HCT116 (cell line): ENCODE measurements at regions of chr17 and their contacts with region 1.

Region 1: GRCh38 chr17:43878260-43879175 is 28.8 kb downstream of the MPP2 start:
- DNase-seq: peak; percentile 37
- ATAC-seq: peak; percentile 95
- H3K4me3 ChIP-seq: no peak overlapping the region
- H3K27ac ChIP-seq: no peak overlapping the region
- H3K4me1 ChIP-seq: peaks cover 0 to 9% of the 10 kb centered on the region in 2 experiments; a peak in 2 of 4 replicates
- H3K27me3 ChIP-seq: no peaks in the 10 kb centered on the region
- CTCF ChIP-seq: peak; percentile 91 to 95 (median 95)
- POLR2A ChIP-seq: no peak
- RAD21 ChIP-seq: peak; percentile 87

Region 2: DNA sequence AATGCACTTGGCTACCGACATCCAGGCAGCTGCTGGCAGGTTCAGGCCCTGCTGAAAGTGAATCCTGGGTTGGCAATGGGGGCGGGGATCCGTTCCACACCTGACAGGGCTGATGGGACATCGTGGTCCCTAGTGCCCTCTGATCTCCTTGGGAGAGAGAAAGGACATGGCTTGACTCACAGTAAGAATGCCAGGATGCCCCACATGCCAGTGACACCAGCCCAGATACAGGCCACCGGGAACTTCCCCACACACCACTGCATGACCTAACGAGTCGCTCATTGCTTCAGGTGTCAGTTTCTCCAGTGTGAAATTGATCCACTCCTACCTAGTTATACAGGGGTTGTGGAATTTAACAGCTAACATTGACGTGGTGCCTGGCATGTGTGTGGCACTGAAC is 24.1 kb before region 1 on chr17:
- CTCF ChIA-PET with region 1: no interaction called
- POLR2A ChIA-PET with region 1: no interaction called
- RAD21 ChIA-PET with region 1: no interaction called
- intact Hi-C with region 1: no loop called
- DNase-seq: no peak
- ATAC-seq: no peak
- H3K4me3 ChIP-seq: no peak overlapping the region
- H3K27ac ChIP-seq: no peak overlapping the region
- H3K4me1 ChIP-seq: no peaks in the 10 kb centered on the region
- H3K27me3 ChIP-seq: no peaks in the 10 kb centered on the region
- CTCF ChIP-seq: no peak
- POLR2A ChIP-seq: no peak
- RAD21 ChIP-seq: no peak

Region 3: GRCh38 chr17:43952336-43952716 is 73.8 kb after region 1 on chr17:
- CTCF ChIA-PET with region 1: no interaction called
- POLR2A ChIA-PET with region 1: no interaction called
- RAD21 ChIA-PET with region 1: no interaction called
- intact Hi-C with region 1: no loop called
- DNase-seq: no peak
- ATAC-seq: no peak
- H3K4me3 ChIP-seq: no peak overlapping the region
- H3K27ac ChIP-seq: no peak overlapping the region
- H3K4me1 ChIP-seq: no peaks in the 10 kb centered on the region
- H3K27me3 ChIP-seq: no peaks in the 10 kb centered on the region
- CTCF ChIP-seq: no peak
- POLR2A ChIP-seq: no peak
- RAD21 ChIP-seq: no peak

Region 4: GRCh38 chr17:43994272-43995149 is 116.0 kb after region 1 on chr17:
- CTCF ChIA-PET with region 1: interaction called, 4 read pairs
- POLR2A ChIA-PET with region 1: no interaction called
- RAD21 ChIA-PET with region 1: no interaction called
- intact Hi-C with region 1: loop called (anchors 1 kb)
- DNase-seq: no peak
- ATAC-seq: peak; percentile 93
- H3K4me3 ChIP-seq: no peak overlapping the region
- H3K27ac ChIP-seq: no peak overlapping the region
- H3K4me1 ChIP-seq: peaks cover 0 to 16% of the 10 kb centered on the region in 2 experiments; a peak in 2 of 4 replicates
- H3K27me3 ChIP-seq: no peaks in the 10 kb centered on the region
- CTCF ChIP-seq: peak; percentile 79 to 95 (median 85)
- POLR2A ChIP-seq: no peak
- RAD21 ChIP-seq: peak; percentile 94

Region 5: DNA sequence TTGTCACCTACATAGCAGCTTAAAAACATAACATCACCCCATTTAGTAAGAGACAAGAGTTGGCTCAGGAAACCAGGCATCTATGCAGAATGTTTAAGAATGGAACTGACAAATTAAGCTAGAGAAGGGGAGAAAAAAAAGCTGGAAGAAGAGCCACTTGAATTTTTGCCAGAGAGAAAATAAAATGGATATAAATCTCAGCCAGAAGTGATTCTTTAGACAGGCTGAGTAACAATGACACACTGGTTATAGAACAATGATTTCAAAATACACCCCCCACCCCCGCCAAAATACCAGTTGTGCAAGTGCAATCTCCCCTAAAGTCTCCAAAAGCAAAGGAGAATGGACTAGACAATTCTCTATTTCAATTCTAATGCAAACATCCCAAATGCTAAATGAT is 165.5 kb after region 1 on chr17:
- CTCF ChIA-PET with region 1: interaction called, 4 read pairs
- POLR2A ChIA-PET with region 1: no interaction called
- RAD21 ChIA-PET with region 1: interaction called in 1 of 2 experiments, 10 read pairs
- intact Hi-C with region 1: loop called (anchors 2 kb)
- DNase-seq: no peak
- ATAC-seq: no peak
- H3K4me3 ChIP-seq: no peak overlapping the region
- H3K27ac ChIP-seq: no peak overlapping the region
- H3K4me1 ChIP-seq: no peaks in the 10 kb centered on the region
- H3K27me3 ChIP-seq: no peaks in the 10 kb centered on the region
- CTCF ChIP-seq: no peak
- POLR2A ChIP-seq: no peak
- RAD21 ChIP-seq: no peak